ENCODE measurements at regions of chr6 and their contacts with region 1.

Region 1: GRCh38 chr6:111709615-111710398 is 104.1 kb upstream of the TRAF3IP2 start:
- DNase-seq: peak; percentile 29 to 85 (median 57)
- ATAC-seq: peak; percentile 83
- H3K4me3 ChIP-seq: no peak overlapping the region
- H3K4me3 Mint-ChIP-seq: no peak overlapping the region
- H3K27ac ChIP-seq: peak overlapping the region in 1 of 2 experiments; percentile 48
- H3K27ac Mint-ChIP-seq: peak overlapping the region; percentile 85
- H3K4me1 ChIP-seq: peaks cover 30% of the 10 kb centered on the region
- H3K4me1 Mint-ChIP-seq: peaks cover 52% of the 10 kb centered on the region
- H3K27me3 ChIP-seq: no peaks in the 10 kb centered on the region
- H3K27me3 Mint-ChIP-seq: no peaks in the 10 kb centered on the region
- CTCF ChIP-seq: peak; percentile 80

Region 2: GRCh38 chr6:111743862-111744692 is 34.3 kb after region 1 on chr6:
- CTCF ChIA-PET with region 1: interaction called, 12 read pairs
- POLR2A ChIA-PET with region 1: no interaction called
- intact Hi-C with region 1: loop called in 1 of 2 experiments (anchors 2 kb)
- DNase-seq: no peak
- ATAC-seq: no peak
- H3K4me3 ChIP-seq: no peak overlapping the region
- H3K4me3 Mint-ChIP-seq: no peak overlapping the region
- H3K27ac ChIP-seq: no peak overlapping the region
- H3K27ac Mint-ChIP-seq: peak overlapping the region; percentile 82
- H3K4me1 ChIP-seq: peaks cover 77% of the 10 kb centered on the region
- H3K4me1 Mint-ChIP-seq: peaks cover 95% of the 10 kb centered on the region
- H3K27me3 ChIP-seq: no peaks in the 10 kb centered on the region
- H3K27me3 Mint-ChIP-seq: no peaks in the 10 kb centered on the region
- CTCF ChIP-seq: no peak

Region 3: DNA sequence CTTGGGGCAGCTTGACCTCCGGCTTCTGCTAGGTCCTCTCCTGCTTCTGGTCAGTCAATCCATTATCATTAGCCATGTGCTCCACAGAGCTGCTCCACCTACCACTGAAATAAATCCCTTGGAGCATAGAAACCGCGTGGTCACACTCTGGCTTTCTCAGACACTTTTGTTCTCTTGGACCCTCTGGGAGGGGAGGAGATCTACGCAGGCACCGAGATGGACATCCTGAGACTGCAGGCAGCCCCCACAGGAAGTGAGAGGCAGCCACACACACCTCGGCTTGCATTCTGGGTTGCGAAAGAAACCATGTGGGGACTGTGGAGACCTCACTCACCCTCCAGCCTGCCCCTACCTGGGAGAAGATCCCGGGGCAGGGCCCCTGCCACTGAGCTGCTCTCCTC is 83.9 kb after region 1 on chr6:
- CTCF ChIA-PET with region 1: no interaction called
- POLR2A ChIA-PET with region 1: no interaction called
- intact Hi-C with region 1: no loop called
- DNase-seq: peak; percentile 33 to 85 (median 54)
- ATAC-seq: peak; percentile 73
- H3K4me3 ChIP-seq: peak overlapping the region; percentile 48 to 62
- H3K4me3 Mint-ChIP-seq: peak overlapping the region; percentile 85
- H3K27ac ChIP-seq: peak overlapping the region; percentile 53 to 75
- H3K27ac Mint-ChIP-seq: peak overlapping the region; percentile 94
- H3K4me1 ChIP-seq: peaks cover 60% of the 10 kb centered on the region
- H3K4me1 Mint-ChIP-seq: peaks cover 71% of the 10 kb centered on the region
- H3K27me3 ChIP-seq: no peaks in the 10 kb centered on the region
- H3K27me3 Mint-ChIP-seq: no peaks in the 10 kb centered on the region
- CTCF ChIP-seq: no peak

Region 4: DNA sequence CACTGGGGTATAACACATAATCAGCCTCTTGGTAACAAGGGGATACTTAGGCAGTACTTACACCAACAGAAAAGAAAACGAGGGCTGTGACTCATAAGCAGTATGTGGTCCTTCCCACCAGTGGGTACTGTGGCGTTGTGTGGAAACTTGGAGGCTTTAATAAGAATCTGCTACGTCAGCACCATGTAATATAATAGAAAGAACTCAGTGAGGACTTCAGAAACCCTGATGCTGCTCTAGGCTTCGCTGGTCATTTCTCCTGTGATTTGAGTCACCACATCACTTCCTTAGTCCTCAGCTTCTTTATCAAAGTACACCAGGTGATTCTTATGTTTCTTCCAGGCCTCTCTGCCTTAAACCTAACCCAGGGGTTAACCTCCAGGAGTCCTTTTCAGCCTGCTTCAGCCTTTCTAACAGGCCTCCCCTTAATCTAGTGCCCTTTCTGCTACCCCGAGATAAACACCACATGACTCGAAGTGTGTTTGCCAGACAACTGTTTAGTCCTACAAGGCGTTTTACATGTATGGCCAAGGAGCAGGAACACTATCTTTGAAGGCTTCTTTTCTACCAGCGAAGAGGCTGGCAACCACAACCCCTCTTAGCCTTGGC is 94.9 kb after region 1 on chr6:
- CTCF ChIA-PET with region 1: interaction called, 4 read pairs
- POLR2A ChIA-PET with region 1: interaction called, 3 read pairs
- intact Hi-C with region 1: loop called (anchors 1 to 5 kb)
- DNase-seq: peak; percentile 27 to 92 (median 62)
- ATAC-seq: peak; percentile 73
- H3K4me3 ChIP-seq: no peak overlapping the region
- H3K4me3 Mint-ChIP-seq: peak overlapping the region; percentile 60
- H3K27ac ChIP-seq: peak overlapping the region; percentile 16 to 84
- H3K27ac Mint-ChIP-seq: peak overlapping the region; percentile 97
- H3K4me1 ChIP-seq: peaks cover 70% of the 10 kb centered on the region
- H3K4me1 Mint-ChIP-seq: peaks cover 95% of the 10 kb centered on the region
- H3K27me3 ChIP-seq: no peaks in the 10 kb centered on the region
- H3K27me3 Mint-ChIP-seq: no peaks in the 10 kb centered on the region
- CTCF ChIP-seq: peak; percentile 53

Region 5: DNA sequence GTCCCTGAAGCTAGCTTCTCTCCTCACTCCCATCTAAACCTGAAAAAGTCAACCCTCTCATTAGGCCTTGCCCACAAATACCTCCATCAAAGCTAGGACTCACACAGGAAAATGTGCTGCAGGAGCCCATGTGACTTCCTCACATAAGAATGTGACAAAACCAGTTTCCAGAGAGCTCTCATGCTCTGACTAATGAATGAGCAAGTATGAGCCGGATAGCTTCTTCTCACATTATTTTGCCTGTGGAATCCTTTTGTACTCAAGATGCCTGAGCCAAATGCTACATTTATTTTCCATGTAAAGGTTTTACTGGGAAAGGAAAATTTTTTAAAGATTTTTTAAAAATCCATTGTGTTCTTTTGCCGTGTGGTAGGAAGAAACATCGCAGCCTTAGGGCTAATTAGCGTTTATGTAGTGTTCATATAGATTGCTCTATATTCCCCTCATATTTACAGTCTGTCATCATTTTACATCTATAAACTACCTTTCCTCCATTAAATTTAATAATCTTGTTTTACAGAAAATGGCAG is 275.5 kb after region 1 on chr6:
- CTCF ChIA-PET with region 1: interaction called, 14 read pairs
- POLR2A ChIA-PET with region 1: interaction called, 3 read pairs
- intact Hi-C with region 1: no loop called
- DNase-seq: peak in 5 of 9 experiments; percentile 25 to 79 (median 38)
- ATAC-seq: peak; percentile 53
- H3K4me3 ChIP-seq: no peak overlapping the region
- H3K4me3 Mint-ChIP-seq: peak overlapping the region; percentile 13
- H3K27ac ChIP-seq: peak overlapping the region in 1 of 2 experiments; percentile 30
- H3K27ac Mint-ChIP-seq: peak overlapping the region; percentile 81
- H3K4me1 ChIP-seq: peaks cover 66% of the 10 kb centered on the region
- H3K4me1 Mint-ChIP-seq: peaks cover 89% of the 10 kb centered on the region
- H3K27me3 ChIP-seq: no peaks in the 10 kb centered on the region
- H3K27me3 Mint-ChIP-seq: no peaks in the 10 kb centered on the region
- CTCF ChIP-seq: no peak

Region 6: GRCh38 chr6:112029045-112029822 is 319.4 kb after region 1 on chr6:
- CTCF ChIA-PET with region 1: interaction called, 10 read pairs
- POLR2A ChIA-PET with region 1: no interaction called
- intact Hi-C with region 1: no loop called
- DNase-seq: peak; percentile 35 to 81 (median 64)
- ATAC-seq: no peak
- H3K4me3 ChIP-seq: no peak overlapping the region
- H3K4me3 Mint-ChIP-seq: peak overlapping the region; percentile 61
- H3K27ac ChIP-seq: peak overlapping the region; percentile 46 to 85
- H3K27ac Mint-ChIP-seq: peak overlapping the region; percentile 95
- H3K4me1 ChIP-seq: peaks cover 66% of the 10 kb centered on the region
- H3K4me1 Mint-ChIP-seq: peaks cover 76% of the 10 kb centered on the region
- H3K27me3 ChIP-seq: no peaks in the 10 kb centered on the region
- H3K27me3 Mint-ChIP-seq: no peaks in the 10 kb centered on the region
- CTCF ChIP-seq: peak; percentile 58

Region 7: DNA sequence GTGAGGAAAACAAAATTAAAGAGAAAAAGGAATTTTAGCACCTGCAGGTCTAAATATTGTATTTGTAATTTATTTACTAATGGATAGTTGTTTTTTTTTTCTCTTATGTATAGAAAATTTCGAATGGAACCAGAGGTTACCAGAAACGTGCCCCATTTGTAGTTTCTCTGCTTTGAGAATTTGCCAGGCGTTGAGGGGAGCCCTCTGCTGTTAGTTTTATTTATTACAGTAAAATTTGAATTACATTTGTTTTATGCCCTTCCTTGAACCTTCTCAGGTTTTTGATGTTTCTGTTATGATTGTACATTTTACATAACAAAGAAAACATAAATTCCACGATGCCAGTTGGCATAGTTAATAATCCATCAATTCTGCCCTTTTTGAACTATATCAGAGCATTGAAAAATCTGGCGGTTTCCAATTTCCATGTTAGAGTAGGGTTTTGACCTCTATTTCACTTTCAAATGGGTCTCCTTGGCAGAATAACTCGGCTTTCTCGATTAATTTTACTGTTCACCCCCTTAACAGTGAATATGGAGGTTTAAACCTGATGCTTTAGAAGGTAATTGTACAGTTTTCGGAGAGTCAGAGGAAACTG is 602.2 kb after region 1 on chr6:
- CTCF ChIA-PET with region 1: no interaction called
- POLR2A ChIA-PET with region 1: no interaction called
- intact Hi-C with region 1: loop called in 1 of 2 experiments (anchors 5 kb)
- DNase-seq: peak in 3 of 9 experiments; percentile 5 to 50 (median 45)
- ATAC-seq: peak; percentile 52
- H3K4me3 ChIP-seq: no peak overlapping the region
- H3K4me3 Mint-ChIP-seq: no peak overlapping the region
- H3K27ac ChIP-seq: no peak overlapping the region
- H3K27ac Mint-ChIP-seq: no peak overlapping the region
- H3K4me1 ChIP-seq: no peaks in the 10 kb centered on the region
- H3K4me1 Mint-ChIP-seq: no peaks in the 10 kb centered on the region
- H3K27me3 ChIP-seq: no peaks in the 10 kb centered on the region
- H3K27me3 Mint-ChIP-seq: peaks cover 16% of the 10 kb centered on the region
- CTCF ChIP-seq: peak; percentile 69